Vagina (tissue), 2 donors: ENCODE measurements at regions of chr12 and their contacts with region 1.

Region 1: GRCh38 chr12:115998119-115998633 is 279.3 kb downstream of the MED13L start:
- DNase-seq: no peak
- H3K4me3 ChIP-seq: no peak overlapping the region
- H3K27ac ChIP-seq: peak overlapping the region; percentile 44
- H3K4me1 ChIP-seq: peaks cover 15% of the 10 kb centered on the region
- H3K27me3 ChIP-seq: no peaks in the 10 kb centered on the region
- CTCF ChIP-seq: peak; percentile 38 to 72 (median 69)
- POLR2A ChIP-seq: no peak

Region 2: DNA sequence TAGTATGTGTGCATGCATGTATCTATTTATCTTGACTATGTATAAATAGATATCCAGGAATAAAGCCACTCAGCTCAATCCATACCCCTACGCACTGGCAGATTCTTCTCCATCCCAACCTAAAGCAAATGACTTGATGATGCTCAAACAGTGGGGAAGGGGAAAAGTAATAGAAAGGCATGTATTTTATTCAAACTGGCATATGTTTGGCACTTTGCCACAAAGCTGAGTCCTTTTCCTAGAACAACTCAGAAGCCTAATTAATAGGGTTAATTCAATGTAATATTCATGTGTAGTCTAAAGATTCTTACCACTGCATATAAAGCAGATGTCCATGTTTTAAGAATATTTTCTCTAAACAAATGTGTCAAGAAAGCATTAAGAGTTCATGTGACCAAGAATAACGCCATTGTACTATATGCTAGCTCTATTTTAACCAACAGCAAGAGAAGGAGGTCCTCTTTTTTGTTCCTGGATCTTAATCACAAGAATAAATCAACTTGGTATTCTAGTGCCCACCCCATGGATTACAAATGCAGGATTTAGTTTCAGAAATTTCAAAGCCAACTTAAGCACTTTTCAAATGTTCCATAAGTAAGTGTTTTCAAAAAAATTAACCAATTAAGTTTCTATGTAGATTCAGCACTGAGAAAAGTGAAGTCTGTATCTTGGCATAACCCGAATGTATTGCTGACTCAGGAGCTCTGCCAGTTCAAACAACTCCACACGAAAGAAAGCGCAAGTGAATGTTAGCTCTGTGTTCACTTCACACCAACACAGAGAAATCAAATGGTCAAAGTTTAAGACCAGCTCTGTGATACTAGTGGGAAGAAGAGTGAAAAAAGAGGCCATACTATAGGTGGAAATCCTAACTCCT is 45.7 kb after region 1 on chr12:
- intact Hi-C with region 1: no loop called
- DNase-seq: no peak
- H3K4me3 ChIP-seq: no peak overlapping the region
- H3K27ac ChIP-seq: no peak overlapping the region
- H3K4me1 ChIP-seq: peaks cover 29% of the 10 kb centered on the region
- H3K27me3 ChIP-seq: no peaks in the 10 kb centered on the region
- CTCF ChIP-seq: no peak
- POLR2A ChIP-seq: no peak

Region 3: DNA sequence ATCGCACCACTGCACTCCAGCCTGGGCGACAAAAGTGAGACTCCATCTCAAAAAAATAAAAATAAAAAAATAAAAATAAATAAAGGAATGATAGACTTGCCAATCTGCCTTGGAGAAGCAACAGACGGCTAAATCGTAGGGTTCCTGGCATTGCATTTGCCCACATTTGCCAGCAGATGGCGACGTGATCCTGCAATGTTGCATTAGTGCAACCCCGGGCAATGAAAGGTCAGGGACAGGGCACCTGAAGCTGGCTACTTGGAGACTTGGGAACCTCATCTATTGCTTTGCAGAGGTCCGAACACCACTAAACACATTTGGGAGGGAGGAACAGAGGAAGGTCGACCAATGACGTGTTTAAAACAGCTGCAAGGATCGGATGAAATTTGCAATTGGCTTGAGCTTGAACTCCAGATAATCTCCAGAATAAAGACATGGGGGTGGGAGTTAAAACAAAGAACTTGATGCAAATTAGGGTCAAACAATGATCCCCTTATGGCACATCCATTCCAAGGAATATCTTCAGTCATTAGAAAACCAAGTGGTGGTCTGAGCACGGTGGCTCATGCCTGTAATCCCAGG is 705.1 kb after region 1 on chr12:
- intact Hi-C with region 1: loop called (anchors 10 kb)
- DNase-seq: no peak
- H3K4me3 ChIP-seq: no peak overlapping the region
- H3K27ac ChIP-seq: no peak overlapping the region
- H3K4me1 ChIP-seq: peaks cover under 1% of the 10 kb centered on the region
- H3K27me3 ChIP-seq: no peaks in the 10 kb centered on the region
- CTCF ChIP-seq: peak; percentile 66 to 93 (median 89)
- POLR2A ChIP-seq: no peak